Posterior cingulate gyrus (tissue), 11 donors: ENCODE measurements at regions of chr19 and their contacts with region 1.

Region 1: DNA sequence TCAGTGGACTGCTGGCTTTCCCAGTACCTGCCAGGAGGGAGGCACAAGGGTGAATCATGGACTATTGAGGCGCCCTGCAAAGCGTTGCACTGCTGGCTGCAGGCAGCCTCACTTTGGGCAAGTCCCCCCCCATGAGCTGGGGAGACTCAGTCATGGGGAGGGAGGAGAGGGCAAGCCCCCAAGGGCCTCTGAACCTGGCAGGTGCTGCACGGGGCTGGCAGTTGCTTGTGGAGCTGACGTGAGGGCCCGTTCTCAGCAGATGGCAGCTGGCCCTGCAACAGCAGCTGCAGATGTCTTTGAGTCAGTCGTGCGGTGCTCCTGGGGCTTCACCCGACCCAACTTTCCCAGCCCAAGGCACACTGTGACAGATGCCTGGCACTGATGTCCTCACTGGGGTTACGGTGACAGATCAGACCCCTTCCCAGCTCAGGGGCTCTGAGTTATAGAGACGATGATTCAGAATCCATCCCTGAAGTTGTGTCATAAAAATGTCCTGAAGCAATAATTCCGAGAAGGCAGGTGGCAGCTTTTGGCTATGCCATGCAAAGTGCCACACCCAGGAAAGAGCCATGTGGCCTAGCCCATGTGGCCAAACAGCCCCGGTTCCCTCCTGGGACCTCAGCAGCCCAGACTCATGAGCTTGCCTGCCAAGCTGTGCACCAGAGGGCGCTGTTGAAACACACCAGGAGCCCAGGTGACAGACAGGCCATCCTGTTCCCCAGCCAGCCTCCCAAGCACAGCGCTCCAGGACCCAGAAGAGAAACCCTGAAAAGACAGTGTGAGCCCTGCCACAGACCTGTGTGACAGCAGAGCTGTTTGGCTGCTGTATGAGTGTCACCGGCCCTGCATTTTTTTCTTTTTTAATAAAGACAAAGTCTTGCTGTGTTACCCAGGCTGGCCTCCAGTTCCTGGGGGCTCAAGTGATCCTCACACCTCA is 53.6 kb upstream of the LDLR start:
- DNase-seq: peak; percentile 64 to 96 (median 84)

Region 2: DNA sequence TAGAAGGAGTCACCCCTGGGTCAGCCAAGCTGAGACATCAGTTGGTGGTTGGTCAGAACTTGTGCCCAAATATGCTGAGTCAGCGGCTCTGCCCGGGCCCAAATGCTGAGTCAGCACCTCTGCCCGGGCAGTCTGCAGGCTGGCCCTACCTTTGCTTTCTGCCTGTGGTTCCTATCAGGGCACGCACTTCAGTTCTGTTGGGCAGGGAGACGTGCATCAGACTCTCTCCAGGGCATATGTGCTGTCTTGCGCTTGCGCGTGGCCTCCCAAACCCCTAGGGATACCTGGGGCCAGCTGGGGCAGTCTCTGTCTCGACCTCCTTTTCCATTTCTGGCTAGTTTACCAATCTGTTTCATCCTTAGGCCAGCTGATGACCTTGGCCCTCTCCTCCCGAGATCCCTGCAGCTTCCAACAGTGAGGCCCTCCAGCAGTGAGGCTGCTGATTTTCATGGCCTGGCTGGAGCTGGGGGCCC is 29.2 kb after region 1 on chr19:
- intact Hi-C with region 1: no loop called
- DNase-seq: peak in 2 of 10 donors; percentile 18 to 68

Region 3: DNA sequence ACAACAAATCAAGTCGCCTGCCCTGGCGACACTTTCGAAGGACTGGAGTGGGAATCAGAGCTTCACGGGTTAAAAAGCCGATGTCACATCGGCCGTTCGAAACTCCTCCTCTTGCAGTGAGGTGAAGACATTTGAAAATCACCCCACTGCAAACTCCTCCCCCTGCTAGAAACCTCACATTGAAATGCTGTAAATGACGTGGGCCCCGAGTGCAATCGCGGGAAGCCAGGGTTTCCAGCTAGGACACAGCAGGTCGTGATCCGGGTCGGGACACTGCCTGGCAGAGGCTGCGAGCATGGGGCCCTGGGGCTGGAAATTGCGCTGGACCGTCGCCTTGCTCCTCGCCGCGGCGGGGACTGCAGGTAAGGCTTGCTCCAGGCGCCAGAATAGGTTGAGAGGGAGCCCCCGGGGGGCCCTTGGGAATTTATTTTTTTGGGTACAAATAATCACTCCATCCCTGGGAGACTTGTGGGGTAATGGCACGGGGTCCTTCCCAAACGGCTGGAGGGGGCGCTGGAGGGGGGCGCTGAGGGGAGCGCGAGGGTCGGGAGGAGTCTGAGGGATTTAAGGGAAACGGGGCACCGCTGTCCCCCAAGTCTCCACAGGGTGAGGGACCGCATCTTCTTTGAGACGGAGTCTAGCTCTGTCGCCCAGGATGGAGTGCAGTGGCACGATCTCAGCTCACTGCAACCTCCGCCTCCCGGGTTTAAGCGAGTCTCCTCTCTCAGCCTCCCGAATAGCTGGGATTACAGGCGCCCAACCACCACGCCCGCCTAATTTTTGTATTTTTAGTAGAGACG is 53.7 kb after region 1 on chr19 and contains the start of gene LDLR:
- intact Hi-C with region 1: loop called (anchors 5 kb)
- DNase-seq: peak; percentile 46 to 93 (median 64)

Region 4: GRCh38 chr19:11130824-11131455 is 95.2 kb after region 1 on chr19:
- intact Hi-C with region 1: loop called (anchors 5 kb)
- DNase-seq: peak; percentile 33 to 96 (median 77)